Activated CD4-positive, alpha-beta T cell treated with anti-CD3 and anti-CD28 coated beads for 36 hours (primary cell): ENCODE measurements at regions of chr9 and their contacts with region 1.

Region 1: DNA sequence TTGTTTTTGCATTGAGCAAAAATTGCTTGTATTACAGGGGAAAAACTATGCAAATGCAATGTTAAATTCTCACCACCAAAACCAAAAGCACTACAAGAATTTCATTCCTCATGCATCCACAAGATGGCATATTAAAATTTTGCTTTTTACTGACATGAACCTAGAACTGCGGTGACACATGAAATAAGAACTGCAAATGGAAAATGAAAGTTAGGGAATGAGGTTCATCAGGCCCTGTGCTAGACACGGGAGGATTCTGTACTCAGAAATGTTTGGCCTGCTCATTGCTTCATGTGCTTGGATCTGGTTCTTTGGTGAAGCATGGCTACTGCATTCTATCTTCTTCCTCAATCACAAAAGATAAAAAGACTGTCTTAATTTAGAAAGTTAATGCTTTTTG is 9.1 kb upstream of the RFK start:
- DNase-seq: peak; percentile 30
- ATAC-seq: peak; percentile 94
- H3K4me3 Mint-ChIP-seq: peak overlapping the region; percentile 16
- H3K27ac Mint-ChIP-seq: peak overlapping the region; percentile 62
- H3K4me1 Mint-ChIP-seq: peaks cover 11% of the 10 kb centered on the region
- H3K27me3 Mint-ChIP-seq: no peaks in the 10 kb centered on the region

Region 2: DNA sequence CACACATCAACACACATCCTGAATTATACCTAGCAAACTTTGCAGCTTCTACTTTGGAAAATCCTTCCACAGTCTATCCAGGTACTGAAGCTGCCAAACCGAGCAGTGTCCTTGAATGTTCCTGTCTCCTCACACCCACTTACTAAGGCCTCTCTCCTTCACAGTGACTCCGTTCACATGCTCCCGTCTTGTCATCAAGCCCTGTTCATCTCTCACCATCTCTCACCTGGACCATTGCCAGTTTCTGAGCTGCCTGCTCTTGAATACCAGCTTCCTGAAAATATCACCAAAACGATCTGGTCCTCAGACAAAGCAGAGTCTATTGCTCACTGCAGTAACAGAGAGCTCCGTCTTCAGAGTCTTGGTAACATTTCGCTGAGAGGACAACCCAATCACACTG is 113.0 kb after region 1 on chr9:
- CTCF ChIA-PET with region 1: no interaction called
- POLR2A ChIA-PET with region 1: no interaction called
- intact Hi-C with region 1: loop called in 1 of 2 experiments (anchors 5 kb)
- DNase-seq: peak; percentile 16
- ATAC-seq: peak; percentile 16
- H3K4me3 Mint-ChIP-seq: no peak overlapping the region
- H3K27ac Mint-ChIP-seq: no peak overlapping the region
- H3K4me1 Mint-ChIP-seq: peaks cover 6% of the 10 kb centered on the region
- H3K27me3 Mint-ChIP-seq: peaks cover 4% of the 10 kb centered on the region